Calu3 (cell line): ENCODE measurements at regions of chr6 and their contacts with region 1.

Region 1: DNA sequence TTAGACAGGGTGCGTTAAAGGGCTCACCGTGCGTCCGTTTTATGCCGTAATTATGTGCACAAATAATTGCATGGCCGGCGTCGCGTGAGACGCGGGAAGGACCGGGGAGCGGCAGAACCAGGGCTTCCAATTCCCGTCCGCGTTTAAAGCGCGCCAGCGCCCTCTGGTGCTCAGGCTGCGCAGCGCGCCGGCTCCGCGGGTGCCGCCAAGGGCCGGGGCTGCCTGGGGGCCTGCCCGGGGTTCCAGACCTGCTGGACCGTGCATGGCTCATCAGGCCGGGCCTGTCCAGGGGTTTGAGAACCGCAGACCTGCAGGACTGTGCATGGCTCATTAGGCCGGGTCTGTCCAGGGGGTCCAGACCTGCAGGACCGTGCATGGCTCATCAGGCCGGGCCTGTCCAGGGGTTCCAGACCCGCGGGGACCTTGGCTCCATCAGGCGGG is 369.0 kb downstream of the THBS2 start:
- DNase-seq: peak; percentile 87
- H3K4me3 Mint-ChIP-seq: no peak overlapping the region
- H3K27ac Mint-ChIP-seq: peak overlapping the region; percentile 55
- H3K4me1 Mint-ChIP-seq: peaks cover 21% of the 10 kb centered on the region
- H3K27me3 Mint-ChIP-seq: no peaks in the 10 kb centered on the region
- CTCF ChIP-seq: peak; percentile 94

Region 2: DNA sequence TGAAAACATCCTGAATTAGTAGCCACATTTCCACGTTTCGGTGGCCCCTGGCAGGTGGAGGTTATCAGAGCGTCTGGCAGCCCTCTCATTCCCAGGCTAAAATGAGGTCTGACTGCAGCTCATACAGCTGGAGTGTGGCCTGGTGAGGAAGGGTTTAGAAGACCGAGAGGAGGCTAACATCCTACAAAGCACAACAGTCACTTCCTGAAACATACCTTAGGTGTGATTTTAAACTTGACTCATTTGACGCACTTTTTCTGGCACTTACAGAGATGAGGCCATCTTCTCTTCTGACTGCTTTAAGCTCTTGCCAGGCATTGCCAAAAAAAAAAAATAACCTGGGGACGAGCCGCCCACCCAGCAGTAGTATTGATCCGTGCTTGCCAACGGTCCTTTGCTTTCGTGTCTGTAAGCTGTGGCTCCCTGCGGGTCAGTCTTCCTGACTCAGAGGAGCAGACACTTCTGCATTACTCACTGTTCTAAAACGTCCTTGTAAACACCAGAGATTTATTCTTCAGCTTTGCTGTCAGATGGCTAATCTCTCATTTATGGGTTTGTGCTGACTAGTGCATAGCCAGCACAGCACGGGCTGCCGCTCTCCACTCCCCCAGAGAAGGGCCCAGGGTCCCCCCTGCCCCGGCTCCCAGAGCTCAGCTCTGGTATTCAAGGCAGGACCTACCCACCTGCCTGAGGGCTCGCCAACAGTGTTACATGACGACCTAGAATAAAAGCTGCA is 727.2 kb before region 1 on chr6:
- CTCF ChIA-PET with region 1: no interaction called
- intact Hi-C with region 1: loop called (anchors 5 kb)
- DNase-seq: peak; percentile 12
- H3K4me3 Mint-ChIP-seq: peak overlapping the region; percentile 34
- H3K27ac Mint-ChIP-seq: no peak overlapping the region
- H3K4me1 Mint-ChIP-seq: peaks cover 21% of the 10 kb centered on the region
- H3K27me3 Mint-ChIP-seq: peaks cover 49% of the 10 kb centered on the region
- CTCF ChIP-seq: no peak

Region 3: GRCh38 chr6:168370310-168370991 is 514.2 kb before region 1 on chr6:
- CTCF ChIA-PET with region 1: interaction called, 7 read pairs
- intact Hi-C with region 1: loop called (anchors 1 kb)
- DNase-seq: peak; percentile 90
- H3K4me3 Mint-ChIP-seq: no peak overlapping the region
- H3K27ac Mint-ChIP-seq: no peak overlapping the region
- H3K4me1 Mint-ChIP-seq: no peaks in the 10 kb centered on the region
- H3K27me3 Mint-ChIP-seq: no peaks in the 10 kb centered on the region
- CTCF ChIP-seq: peak; percentile 91

Region 4: GRCh38 chr6:168616816-168617765 is 267.6 kb before region 1 on chr6:
- CTCF ChIA-PET with region 1: no interaction called
- intact Hi-C with region 1: loop called (anchors 1 kb)
- DNase-seq: peak; percentile 65
- H3K4me3 Mint-ChIP-seq: no peak overlapping the region
- H3K27ac Mint-ChIP-seq: peak overlapping the region; percentile 54
- H3K4me1 Mint-ChIP-seq: peaks cover 36% of the 10 kb centered on the region
- H3K27me3 Mint-ChIP-seq: no peaks in the 10 kb centered on the region
- CTCF ChIP-seq: peak; percentile 53

Region 5: DNA sequence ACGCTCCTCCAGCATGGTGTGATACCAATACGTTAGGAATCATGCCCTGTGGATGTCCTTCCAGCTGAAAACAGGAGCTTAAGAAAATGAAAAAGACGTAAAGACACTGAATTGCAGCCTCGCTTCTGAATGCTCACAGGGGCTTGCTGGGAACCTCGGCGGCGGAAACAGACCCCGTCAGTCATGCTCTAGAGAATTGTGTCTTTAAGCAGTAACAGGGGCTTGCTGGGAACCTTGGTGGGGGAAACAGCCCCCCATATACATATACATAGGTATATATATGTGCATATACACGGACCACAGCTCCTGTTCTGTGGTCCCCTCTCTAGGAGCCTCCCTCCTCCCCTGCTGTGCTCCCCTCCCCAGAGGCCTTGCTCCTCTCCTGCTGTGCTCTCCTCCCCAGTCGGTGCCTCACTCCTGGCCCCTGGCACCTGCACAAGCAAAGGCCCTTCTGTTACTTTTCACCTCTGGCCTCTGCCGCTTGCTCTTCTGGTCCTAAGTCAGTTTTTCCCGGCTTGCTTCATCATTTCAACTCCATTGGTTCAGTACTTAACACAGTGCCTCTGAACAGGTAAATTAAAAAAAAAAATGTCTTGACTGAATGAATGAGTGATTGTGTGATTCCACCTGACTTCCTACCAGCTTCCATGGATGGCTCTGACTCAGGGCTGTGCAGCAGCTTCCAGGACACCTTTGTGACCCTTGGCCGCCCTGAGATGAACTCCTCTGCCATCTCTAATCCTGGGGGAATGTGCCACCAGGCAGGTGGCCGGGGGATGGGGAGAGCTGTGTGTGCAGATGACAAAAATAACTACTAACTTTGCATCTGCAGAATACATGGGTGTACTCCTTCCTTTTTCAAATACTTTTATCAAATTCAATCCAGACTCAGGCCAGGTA is 197.6 kb before region 1 on chr6:
- CTCF ChIA-PET with region 1: no interaction called
- intact Hi-C with region 1: loop called (anchors 5 kb)
- DNase-seq: peak; percentile 52
- H3K4me3 Mint-ChIP-seq: no peak overlapping the region
- H3K27ac Mint-ChIP-seq: peak overlapping the region; percentile 96
- H3K4me1 Mint-ChIP-seq: peaks cover 49% of the 10 kb centered on the region
- H3K27me3 Mint-ChIP-seq: no peaks in the 10 kb centered on the region
- CTCF ChIP-seq: no peak

Region 6: GRCh38 chr6:169026175-169026574 is 141.5 kb after region 1 on chr6:
- CTCF ChIA-PET with region 1: no interaction called
- intact Hi-C with region 1: no loop called
- DNase-seq: no peak
- H3K4me3 Mint-ChIP-seq: no peak overlapping the region
- H3K27ac Mint-ChIP-seq: no peak overlapping the region
- H3K4me1 Mint-ChIP-seq: no peaks in the 10 kb centered on the region
- H3K27me3 Mint-ChIP-seq: no peaks in the 10 kb centered on the region
- CTCF ChIP-seq: no peak